Ovary (tissue), 10 donors: ENCODE measurements at regions of chr11 and their contacts with region 1.

Region 1: GRCh38 chr11:120108154-120108865 is 29.6 kb downstream of the TRIM29 start:
- DNase-seq: peak; percentile 34 to 79 (median 66)
- H3K4me3 ChIP-seq: no peak overlapping the region
- H3K27ac ChIP-seq: no peak overlapping the region
- H3K4me1 ChIP-seq: no peaks in the 10 kb centered on the region
- H3K27me3 ChIP-seq: no peaks in the 10 kb centered on the region
- CTCF ChIP-seq: peak; percentile 75 to 95 (median 94)
- EP300 ChIP-seq: no peak
- POLR2A ChIP-seq: no peak

Region 2: GRCh38 chr11:119481021-119481666 is 627.2 kb before region 1 on chr11:
- intact Hi-C with region 1: loop called in 3 of 4 experiments (anchors 5 to 10 kb)
- DNase-seq: peak; percentile 61 to 90 (median 81)
- H3K4me3 ChIP-seq: no peak overlapping the region
- H3K27ac ChIP-seq: no peak overlapping the region
- H3K4me1 ChIP-seq: no peaks in the 10 kb centered on the region
- H3K27me3 ChIP-seq: no peaks in the 10 kb centered on the region
- CTCF ChIP-seq: peak; percentile 60 to 95 (median 85)
- EP300 ChIP-seq: no peak
- POLR2A ChIP-seq: no peak

Region 3: GRCh38 chr11:119666463-119667131 is 441.7 kb before region 1 on chr11:
- intact Hi-C with region 1: loop called (anchors 2 to 5 kb)
- DNase-seq: peak; percentile 64 to 85 (median 79)
- H3K4me3 ChIP-seq: no peak overlapping the region
- H3K27ac ChIP-seq: no peak overlapping the region
- H3K4me1 ChIP-seq: peaks cover 4% of the 10 kb centered on the region
- H3K27me3 ChIP-seq: no peaks in the 10 kb centered on the region
- CTCF ChIP-seq: peak; percentile 79 to 87 (median 80)
- EP300 ChIP-seq: no peak
- POLR2A ChIP-seq: no peak

Region 4: DNA sequence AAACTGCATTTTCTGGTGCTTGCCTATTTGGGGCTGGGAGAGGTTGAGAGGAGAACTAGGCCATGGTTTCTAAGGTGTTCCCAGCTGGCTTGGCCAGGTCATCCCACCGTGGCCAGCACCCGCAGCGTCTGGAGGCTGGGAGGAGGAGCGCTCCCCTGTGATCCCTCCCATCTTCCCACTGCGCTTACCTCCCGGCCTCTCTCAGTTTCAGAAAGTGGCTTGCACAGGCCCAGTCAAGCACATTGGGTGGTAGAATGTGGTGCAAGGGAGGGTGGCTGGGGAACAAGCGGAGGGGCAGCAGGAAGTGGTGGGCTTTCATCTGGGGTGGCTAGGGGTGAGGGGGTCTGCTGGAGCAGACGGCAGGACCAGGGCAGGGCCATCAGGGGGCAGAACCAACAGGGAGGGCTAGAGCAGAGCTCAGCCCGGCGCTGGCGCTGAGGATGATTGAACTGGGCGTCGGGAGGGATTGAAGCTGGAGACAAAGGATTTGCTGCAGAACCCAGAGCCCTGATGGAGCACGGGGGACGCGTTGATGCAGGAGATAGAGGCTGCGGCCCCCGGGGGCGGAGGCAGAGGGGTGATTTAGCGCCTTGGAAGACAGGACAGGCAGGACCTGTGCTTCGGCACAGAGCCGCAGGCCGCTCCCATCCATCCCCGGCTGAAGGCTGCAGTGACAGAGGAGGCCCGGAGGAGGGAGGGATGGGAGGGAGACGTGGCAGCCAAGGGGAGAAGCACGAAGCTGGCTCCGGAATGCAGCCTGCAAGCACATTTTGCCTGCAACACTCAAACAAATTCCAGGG is 46.3 kb before region 1 on chr11:
- intact Hi-C with region 1: no loop called
- DNase-seq: peak in 2 of 5 donors; percentile 23 to 43
- H3K4me3 ChIP-seq: no peak overlapping the region
- H3K27ac ChIP-seq: no peak overlapping the region
- H3K4me1 ChIP-seq: no peaks in the 10 kb centered on the region
- H3K27me3 ChIP-seq: no peaks in the 10 kb centered on the region
- CTCF ChIP-seq: no peak
- EP300 ChIP-seq: no peak
- POLR2A ChIP-seq: no peak